B cell (primary cell): ENCODE measurements at regions of chr17 and their contacts with region 1.

Region 1: GRCh38 chr17:8156246-8156992 is 4.2 kb upstream of the PER1 start:
- DNase-seq: peak; percentile 100
- ATAC-seq: peak; percentile 79
- H3K4me3 ChIP-seq: peak overlapping the region; percentile 69 to 96 (median 84)
- H3K4me3 Mint-ChIP-seq: no peak overlapping the region
- H3K27ac ChIP-seq: peak overlapping the region; percentile 98 to 100
- H3K27ac Mint-ChIP-seq: no peak overlapping the region
- H3K4me1 ChIP-seq: peaks cover 59 to 85% of the 10 kb centered on the region in 2 donors
- H3K4me1 Mint-ChIP-seq: peaks cover 50% of the 10 kb centered on the region
- H3K27me3 ChIP-seq: no peaks in the 10 kb centered on the region
- H3K27me3 Mint-ChIP-seq: no peaks in the 10 kb centered on the region
- CTCF ChIP-seq: no peak

Region 2: DNA sequence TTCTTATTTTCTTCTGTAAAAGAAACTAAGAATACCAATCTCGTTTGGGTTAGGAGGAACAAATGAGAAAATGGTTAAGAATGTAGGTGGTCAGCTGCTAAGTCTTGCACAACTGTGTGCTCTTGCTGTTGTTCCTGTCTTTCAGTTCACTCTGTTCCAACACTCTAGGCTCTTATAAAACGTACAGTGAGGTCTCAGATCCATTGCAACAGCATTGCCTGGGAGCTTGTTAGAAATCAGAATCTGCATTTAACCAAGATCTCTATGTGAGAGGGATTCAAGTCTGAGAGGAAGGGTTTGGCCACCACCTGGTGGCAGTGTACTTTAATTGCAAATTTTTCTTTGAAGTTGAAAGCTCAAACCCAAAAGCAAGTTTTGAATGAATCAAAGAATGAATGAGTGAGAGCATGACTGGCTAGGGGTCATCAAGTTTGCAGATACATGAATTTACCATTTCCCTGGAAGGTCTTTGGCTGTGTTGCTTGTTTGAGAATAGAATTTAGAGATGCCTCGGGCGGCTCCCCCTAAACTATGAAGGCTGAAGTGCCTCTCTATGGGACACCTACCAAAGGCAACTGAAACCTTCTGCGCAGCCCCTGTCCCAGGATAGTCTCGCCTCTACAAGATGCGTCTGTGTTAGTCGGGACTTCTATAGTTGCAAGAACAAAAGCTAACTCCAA is 115.0 kb before region 1 on chr17:
- CTCF ChIA-PET with region 1: no interaction called
- POLR2A ChIA-PET with region 1: no interaction called
- intact Hi-C with region 1: no loop called
- DNase-seq: peak; percentile 64
- ATAC-seq: no peak
- H3K4me3 ChIP-seq: no peak overlapping the region
- H3K4me3 Mint-ChIP-seq: no peak overlapping the region
- H3K27ac ChIP-seq: no peak overlapping the region
- H3K27ac Mint-ChIP-seq: no peak overlapping the region
- H3K4me1 ChIP-seq: peaks cover 5 to 8% of the 10 kb centered on the region in 2 donors
- H3K4me1 Mint-ChIP-seq: peaks cover 3% of the 10 kb centered on the region
- H3K27me3 ChIP-seq: peaks cover 0 to 14% (median 7%) of the 10 kb centered on the region in 4 experiments
- H3K27me3 Mint-ChIP-seq: peaks cover 42% of the 10 kb centered on the region
- CTCF ChIP-seq: peak; percentile 56

Region 3: DNA sequence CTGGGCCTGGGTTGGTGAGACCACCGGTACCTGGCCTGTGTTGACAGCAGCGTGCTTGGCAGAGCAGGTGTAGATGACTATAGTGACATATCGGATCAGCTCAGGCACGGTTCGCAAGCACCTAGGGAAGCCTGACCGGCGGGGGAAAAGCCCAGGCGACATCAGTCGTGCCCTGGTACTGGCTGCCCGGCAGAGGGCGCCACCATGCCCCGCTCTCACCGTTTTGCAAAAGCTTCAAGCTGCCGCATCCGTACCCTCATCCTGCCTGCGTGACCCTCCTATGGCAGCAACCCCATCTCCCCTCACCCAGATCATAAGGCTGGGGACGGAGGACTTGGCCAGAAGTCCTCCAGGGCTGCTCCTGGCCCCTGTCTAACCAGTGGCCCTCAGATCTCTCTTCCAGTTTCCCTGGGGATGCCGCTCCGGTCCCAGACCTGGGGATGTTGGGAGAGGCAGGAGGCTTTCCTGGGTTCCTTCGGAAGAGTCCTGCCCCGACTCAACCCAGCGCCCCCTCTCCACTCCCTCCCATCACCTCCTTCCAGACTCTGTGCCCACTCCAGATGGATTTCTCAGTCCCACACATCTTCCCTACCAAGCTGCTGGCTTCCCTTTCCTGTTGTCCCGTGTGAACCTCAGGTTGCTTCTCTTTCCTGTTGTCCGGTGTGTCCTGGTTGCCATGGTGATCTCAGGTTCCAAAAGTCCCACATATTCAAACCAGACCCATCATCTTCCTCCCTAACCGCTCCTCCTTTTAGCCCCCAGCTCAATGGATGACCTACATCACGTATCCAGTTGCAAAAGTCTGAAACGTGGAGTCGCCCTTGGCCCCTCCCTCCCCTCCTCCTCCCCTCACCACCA is 82.6 kb before region 1 on chr17:
- CTCF ChIA-PET with region 1: interaction called, 17 read pairs
- POLR2A ChIA-PET with region 1: no interaction called
- intact Hi-C with region 1: no loop called
- DNase-seq: peak; percentile 95
- ATAC-seq: peak; percentile 95
- H3K4me3 ChIP-seq: peak overlapping the region in 1 of 5 experiments; percentile 34
- H3K4me3 Mint-ChIP-seq: peak overlapping the region; percentile 81
- H3K27ac ChIP-seq: no peak overlapping the region
- H3K27ac Mint-ChIP-seq: peak overlapping the region; percentile 57
- H3K4me1 ChIP-seq: peaks cover 28 to 29% of the 10 kb centered on the region in 2 donors
- H3K4me1 Mint-ChIP-seq: peaks cover 27% of the 10 kb centered on the region
- H3K27me3 ChIP-seq: peaks cover 0 to 57% (median 39%) of the 10 kb centered on the region in 4 experiments
- H3K27me3 Mint-ChIP-seq: peaks cover 46% of the 10 kb centered on the region
- CTCF ChIP-seq: peak; percentile 95

Region 4: GRCh38 chr17:8079291-8080207 is 76.9 kb before region 1 on chr17:
- CTCF ChIA-PET with region 1: interaction called, 17 read pairs
- POLR2A ChIA-PET with region 1: no interaction called
- intact Hi-C with region 1: loop called (anchors 2 kb)
- DNase-seq: peak; percentile 90
- ATAC-seq: peak; percentile 82
- H3K4me3 ChIP-seq: peak overlapping the region in 4 of 5 experiments; percentile 57 to 76 (median 70)
- H3K4me3 Mint-ChIP-seq: peak overlapping the region; percentile 96
- H3K27ac ChIP-seq: peak overlapping the region; percentile 48 to 75
- H3K27ac Mint-ChIP-seq: peak overlapping the region; percentile 92
- H3K4me1 ChIP-seq: peaks cover 9 to 15% of the 10 kb centered on the region in 2 donors
- H3K4me1 Mint-ChIP-seq: peaks cover 14% of the 10 kb centered on the region
- H3K27me3 ChIP-seq: peaks cover 0 to 19% (median 10%) of the 10 kb centered on the region in 4 experiments
- H3K27me3 Mint-ChIP-seq: peaks cover 6% of the 10 kb centered on the region
- CTCF ChIP-seq: peak; percentile 90

Region 5: GRCh38 chr17:8091033-8091687 is 65.3 kb before region 1 on chr17:
- CTCF ChIA-PET with region 1: interaction called, 30 read pairs
- POLR2A ChIA-PET with region 1: interaction called, 6 read pairs
- intact Hi-C with region 1: loop called (anchors 1 kb)
- DNase-seq: peak; percentile 90
- ATAC-seq: peak; percentile 90
- H3K4me3 ChIP-seq: peak overlapping the region in 3 of 5 experiments; percentile 4 to 47 (median 29)
- H3K4me3 Mint-ChIP-seq: peak overlapping the region; percentile 78
- H3K27ac ChIP-seq: peak overlapping the region in 1 of 2 donors; percentile 55
- H3K27ac Mint-ChIP-seq: peak overlapping the region; percentile 92
- H3K4me1 ChIP-seq: peaks cover 26 to 43% of the 10 kb centered on the region in 2 donors
- H3K4me1 Mint-ChIP-seq: peaks cover 35% of the 10 kb centered on the region
- H3K27me3 ChIP-seq: no peaks in the 10 kb centered on the region
- H3K27me3 Mint-ChIP-seq: peaks cover 12% of the 10 kb centered on the region
- CTCF ChIP-seq: no peak

Region 6: DNA sequence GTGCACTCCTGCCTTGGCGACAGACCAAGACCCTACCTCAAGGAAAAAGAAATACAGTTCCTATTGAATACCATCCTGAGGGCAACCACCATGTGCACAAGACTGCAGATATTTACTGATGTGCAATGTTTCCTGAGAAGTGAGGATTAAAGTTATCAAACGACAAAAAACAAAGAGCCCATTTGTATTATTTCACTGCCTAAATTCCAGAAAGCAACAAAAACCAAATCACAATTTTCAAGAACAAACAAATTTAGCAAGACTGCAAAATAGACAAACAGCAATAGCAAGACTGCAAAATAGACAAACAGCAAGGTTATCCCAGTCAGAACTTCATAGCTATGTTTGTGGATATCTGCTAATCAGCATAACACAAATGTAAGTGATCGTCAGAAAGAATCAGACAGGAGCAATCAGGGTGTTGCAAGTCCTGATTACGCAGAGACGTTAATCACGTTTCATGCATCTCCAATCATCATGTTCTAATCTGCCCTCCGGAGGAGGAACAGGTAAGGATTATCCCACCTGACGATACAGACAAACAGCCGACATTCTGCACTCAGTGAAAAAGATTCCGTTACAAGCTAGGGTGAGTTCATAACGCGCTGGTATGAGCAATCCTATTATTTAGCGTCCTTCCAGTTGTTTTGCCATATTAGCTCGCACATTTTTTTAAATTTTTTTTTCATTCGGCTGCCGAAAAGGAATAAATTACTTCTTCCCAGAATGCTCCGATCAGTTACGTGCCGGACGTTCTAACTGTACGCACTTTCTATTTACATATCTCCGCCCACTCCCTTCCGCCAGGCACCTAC is 16.8 kb after region 1 on chr17:
- CTCF ChIA-PET with region 1: interaction called, 11 read pairs
- POLR2A ChIA-PET with region 1: interaction called, 18 read pairs
- intact Hi-C with region 1: loop called (anchors 1 kb)
- DNase-seq: peak; percentile 95
- ATAC-seq: peak; percentile 83
- H3K4me3 ChIP-seq: peak overlapping the region; percentile 32 to 96 (median 63)
- H3K4me3 Mint-ChIP-seq: peak overlapping the region; percentile 94
- H3K27ac ChIP-seq: peak overlapping the region; percentile 95 to 99
- H3K27ac Mint-ChIP-seq: peak overlapping the region; percentile 100
- H3K4me1 ChIP-seq: peaks cover 24 to 38% of the 10 kb centered on the region in 2 donors
- H3K4me1 Mint-ChIP-seq: peaks cover 46% of the 10 kb centered on the region
- H3K27me3 ChIP-seq: no peaks in the 10 kb centered on the region
- H3K27me3 Mint-ChIP-seq: no peaks in the 10 kb centered on the region
- CTCF ChIP-seq: no peak

Region 7: DNA sequence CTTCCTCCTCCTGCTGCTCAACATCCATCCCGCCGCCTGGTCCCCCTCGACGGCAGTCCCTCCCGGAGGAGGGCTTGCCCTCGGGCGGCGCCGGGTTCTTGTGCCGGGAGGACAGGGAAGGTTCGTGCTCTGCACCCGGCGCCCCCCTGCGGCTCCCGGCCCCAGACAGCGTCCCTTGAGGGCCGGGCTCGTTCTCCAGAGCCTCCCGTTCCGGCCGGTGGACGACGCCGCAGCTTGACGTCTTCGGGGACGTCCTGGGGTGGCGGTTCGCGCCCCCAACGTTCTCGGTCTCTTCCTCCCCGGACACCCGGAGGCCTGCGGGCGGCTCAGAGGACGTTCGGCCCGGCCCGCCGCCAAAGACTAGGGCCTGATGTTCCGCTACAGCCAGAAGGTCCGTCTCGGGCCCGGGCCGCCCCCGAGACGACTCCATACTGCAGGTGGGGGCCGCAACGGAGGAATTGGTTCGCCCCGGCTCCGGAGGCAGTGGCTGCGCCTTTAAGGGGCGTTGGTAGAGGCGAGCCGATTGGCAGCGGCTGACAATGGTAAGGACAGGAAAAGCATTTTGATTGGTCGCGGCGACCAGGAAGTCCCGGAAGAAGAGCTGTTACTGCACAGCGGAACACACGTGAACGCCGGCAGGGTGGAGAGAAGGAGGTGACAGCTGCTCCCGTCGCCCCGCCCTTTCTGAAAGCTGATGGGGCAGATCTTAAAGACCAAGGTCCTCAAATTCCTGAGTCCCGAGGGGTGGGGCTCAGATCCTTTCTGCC is 33.5 kb after region 1 on chr17 and contains the start of gene BORCS6:
- CTCF ChIA-PET with region 1: interaction called, 10 read pairs
- POLR2A ChIA-PET with region 1: interaction called, 16 read pairs
- intact Hi-C with region 1: loop called (anchors 1 kb)
- DNase-seq: peak; percentile 97
- ATAC-seq: peak; percentile 64
- H3K4me3 ChIP-seq: peak within 1 kb of the TSS; percentile 27 to 97 (median 74)
- H3K4me3 Mint-ChIP-seq: no peak within 1 kb of the TSS
- H3K27ac ChIP-seq: peak within 1 kb of the TSS; percentile 89 to 93
- H3K27ac Mint-ChIP-seq: no peak within 1 kb of the TSS
- H3K4me1 ChIP-seq: peaks cover 36 to 53% of the 10 kb centered on the region in 2 donors
- H3K4me1 Mint-ChIP-seq: peaks cover 11% of the 10 kb centered on the region
- H3K27me3 ChIP-seq: no peaks in the 10 kb centered on the region
- H3K27me3 Mint-ChIP-seq: no peaks in the 10 kb centered on the region
- CTCF ChIP-seq: no peak
- total RNA-seq, gene BORCS6: 18.6 and 20.2 TPM in 2 replicates

Region 8: GRCh38 chr17:8288336-8289102 is 132.1 kb after region 1 on chr17 and contains the start of gene RANGRF:
- CTCF ChIA-PET with region 1: interaction called, 4 read pairs
- POLR2A ChIA-PET with region 1: no interaction called
- intact Hi-C with region 1: loop called (anchors 1 kb)
- DNase-seq: peak; percentile 88
- ATAC-seq: peak; percentile 88
- H3K4me3 ChIP-seq: peak within 1 kb of the TSS; percentile 76 to 98 (median 86)
- H3K4me3 Mint-ChIP-seq: peak within 1 kb of the TSS; percentile 92
- H3K27ac ChIP-seq: peak within 1 kb of the TSS; percentile 92
- H3K27ac Mint-ChIP-seq: peak within 1 kb of the TSS; percentile 98
- H3K4me1 ChIP-seq: peaks cover 22 to 32% of the 10 kb centered on the region in 2 donors
- H3K4me1 Mint-ChIP-seq: peaks cover 51% of the 10 kb centered on the region
- H3K27me3 ChIP-seq: no peaks in the 10 kb centered on the region
- H3K27me3 Mint-ChIP-seq: no peaks in the 10 kb centered on the region
- CTCF ChIP-seq: no peak
- total RNA-seq, gene RANGRF: 46.8 and 48.8 TPM in 2 replicates